Dorsolateral prefrontal cortex (tissue), 120 donors: ENCODE measurements at regions of chr1 and their contacts with region 1.

Region 1: GRCh38 chr1:86833461-86834215 is 80.3 kb downstream of the SELENOF start:
- DNase-seq: peak in 9 of 10 donors; percentile 48 to 60 (median 53)
- H3K4me3 ChIP-seq: no peak overlapping the region
- H3K27ac ChIP-seq: no peak overlapping the region
- H3K27me3 ChIP-seq: no peaks in the 10 kb centered on the region
- CTCF ChIP-seq: peak; percentile 37 to 87 (median 68)

Region 2: GRCh38 chr1:86913896-86914634 is 80.4 kb after region 1 on chr1 and contains the start of gene SELENOF:
- intact Hi-C with region 1: loop called in 1 of 2 experiments (anchors 10 kb)
- DNase-seq: peak; percentile 94 to 99 (median 98)
- H3K4me3 ChIP-seq: peak within 1 kb of the TSS; percentile 61 to 99 (median 89)
- H3K27ac ChIP-seq: peak within 1 kb of the TSS; percentile 59 to 98 (median 93)
- H3K27me3 ChIP-seq: no peaks in the 10 kb centered on the region
- CTCF ChIP-seq: peak in 11 of 56 donors; percentile 5 to 34 (median 9)
- total RNA-seq, gene SELENOF: 81.1 to 146 (median 111) TPM

Region 3: GRCh38 chr1:86950712-86951419 is 117.2 kb after region 1 on chr1:
- intact Hi-C with region 1: no loop called
- DNase-seq: no peak
- H3K4me3 ChIP-seq: no peak overlapping the region
- H3K27ac ChIP-seq: peak overlapping the region in 1 of 59 donors; percentile 54
- H3K27me3 ChIP-seq: no peaks in the 10 kb centered on the region
- CTCF ChIP-seq: no peak

Region 4: DNA sequence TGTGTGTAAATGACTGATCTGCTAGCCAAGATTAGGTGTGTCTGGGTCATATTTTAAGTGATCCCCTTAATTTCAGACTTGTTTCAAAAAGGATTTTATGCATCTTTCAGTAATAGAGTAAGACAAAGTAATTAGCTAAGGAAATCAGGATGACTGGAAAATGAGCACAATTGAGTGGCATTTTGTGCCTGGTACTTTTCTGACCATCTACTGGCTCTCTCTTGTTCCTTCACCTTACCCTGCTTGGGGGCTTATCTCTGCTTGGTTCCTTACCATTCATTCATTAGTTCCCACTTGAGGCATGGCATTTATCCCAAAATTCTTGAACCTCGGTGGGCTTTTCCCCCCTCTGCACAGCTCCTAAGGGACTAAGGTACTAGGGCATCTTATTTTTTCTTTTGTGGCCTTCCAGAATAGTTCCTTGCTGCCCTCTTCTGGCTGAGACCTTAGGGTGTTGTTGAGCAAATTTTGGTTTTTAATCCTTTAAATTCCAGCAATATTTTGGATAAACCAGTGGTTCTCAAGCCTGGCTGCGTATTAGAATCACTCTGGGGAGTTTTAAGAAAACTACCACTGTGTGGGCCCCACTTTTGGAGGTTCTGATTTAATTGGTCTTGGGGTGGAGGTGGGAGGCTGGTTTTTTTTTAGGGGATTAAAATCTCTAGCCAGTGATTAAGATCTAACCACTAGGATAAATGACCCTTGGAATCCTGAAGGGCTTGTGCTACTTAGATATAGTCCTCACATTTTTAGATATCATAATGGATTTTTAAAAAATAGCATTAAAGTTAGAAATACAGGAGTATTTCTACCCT is 131.6 kb after region 1 on chr1:
- intact Hi-C with region 1: loop called (anchors 1 to 5 kb)
- DNase-seq: no peak
- H3K4me3 ChIP-seq: no peak overlapping the region
- H3K27ac ChIP-seq: no peak overlapping the region
- H3K27me3 ChIP-seq: no peaks in the 10 kb centered on the region
- CTCF ChIP-seq: peak in 55 of 56 donors; percentile 15 to 77 (median 59)

Region 5: DNA sequence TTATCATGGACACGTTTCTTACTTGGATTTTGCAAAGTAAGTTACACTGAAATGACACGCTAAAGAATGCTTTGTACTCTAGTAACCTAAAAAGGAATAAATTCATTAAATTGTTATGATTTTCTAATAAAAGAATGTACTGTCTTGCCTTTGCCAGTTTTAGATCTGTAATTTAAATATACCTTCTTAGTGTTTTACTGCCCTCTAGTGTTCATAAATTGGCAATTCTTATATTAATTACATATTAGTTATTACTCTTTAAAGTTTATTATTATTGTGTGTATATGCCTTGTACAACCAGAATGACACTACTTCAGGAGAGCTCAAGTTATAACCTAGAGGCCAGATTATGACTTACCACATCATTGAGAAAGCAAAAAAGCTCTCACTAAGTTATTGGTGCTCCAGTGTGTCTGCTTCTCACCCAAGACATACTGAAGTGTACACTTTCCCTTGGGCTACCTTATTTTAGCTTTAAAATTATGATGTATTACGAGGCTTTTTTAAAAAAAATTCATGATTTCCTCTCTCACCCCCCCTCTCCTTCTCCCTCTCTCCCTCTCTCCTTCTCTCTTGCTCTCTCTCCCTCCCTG is 250.7 kb after region 1 on chr1:
- intact Hi-C with region 1: loop called (anchors 5 kb)
- DNase-seq: no peak
- H3K4me3 ChIP-seq: no peak overlapping the region
- H3K27ac ChIP-seq: no peak overlapping the region
- H3K27me3 ChIP-seq: no peaks in the 10 kb centered on the region
- CTCF ChIP-seq: peak; percentile 38 to 85 (median 66)